OCI-LY7 (cell line): ENCODE measurements at regions of chr2 and their contacts with region 1.

Region 1: GRCh38 chr2:73779467-73780236 is at the start of gene DUSP11:
- DNase-seq: peak; percentile 96
- H3K4me3 ChIP-seq: peak within 1 kb of the TSS; percentile 88
- H3K27ac ChIP-seq: peak within 1 kb of the TSS; percentile 41
- H3K4me1 ChIP-seq: peaks cover 18% of the 10 kb centered on the region
- CTCF ChIP-seq: peak; percentile 90
- total RNA-seq, gene DUSP11: 33.9 and 40.9 TPM in 2 replicates

Region 2: DNA sequence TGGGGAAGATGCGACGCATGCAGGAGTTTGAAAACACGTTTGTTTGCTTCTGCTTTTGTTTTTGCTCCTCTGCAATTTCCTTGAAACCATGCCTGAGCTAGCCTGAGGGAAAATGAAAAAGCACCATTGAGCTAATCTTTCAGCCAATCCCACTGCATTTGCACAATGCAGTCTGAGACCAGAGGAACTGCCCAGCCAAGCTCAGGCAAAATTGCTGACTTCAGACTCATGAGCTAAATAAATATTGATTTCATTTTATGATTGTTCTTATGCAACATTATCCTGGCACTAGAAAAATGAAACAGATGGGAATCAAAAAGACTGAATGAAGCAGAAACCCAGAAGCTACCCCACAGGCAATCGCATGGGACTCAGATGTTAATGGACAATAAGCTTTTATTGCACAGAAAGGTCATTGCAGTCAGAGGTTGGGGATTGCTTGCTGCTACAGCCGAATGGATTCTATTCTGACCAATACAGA is 79.5 kb before region 1 on chr2:
- CTCF ChIA-PET with region 1: no interaction called
- POLR2A ChIA-PET with region 1: no interaction called
- intact Hi-C with region 1: no loop called
- DNase-seq: no peak
- H3K4me3 ChIP-seq: no peak overlapping the region
- H3K27ac ChIP-seq: no peak overlapping the region
- H3K4me1 ChIP-seq: no peaks in the 10 kb centered on the region
- CTCF ChIP-seq: no peak

Region 3: GRCh38 chr2:73736855-73737779 is 42.5 kb before region 1 on chr2 and contains the start of gene TPRKB:
- CTCF ChIA-PET with region 1: no interaction called
- POLR2A ChIA-PET with region 1: no interaction called
- intact Hi-C with region 1: loop called (anchors 1 kb)
- DNase-seq: peak; percentile 98
- H3K4me3 ChIP-seq: peak within 1 kb of the TSS; percentile 92
- H3K27ac ChIP-seq: peak within 1 kb of the TSS; percentile 49
- H3K4me1 ChIP-seq: peaks cover 12% of the 10 kb centered on the region
- CTCF ChIP-seq: no peak
- total RNA-seq, gene TPRKB: 25.4 and 29.3 TPM in 2 replicates